Caco-2 (cell line): ENCODE measurements at regions of chr3 and their contacts with region 1.

Region 1: GRCh38 chr3:150253622-150254021 is 154.5 kb upstream of the TSC22D2 start:
- DNase-seq: no peak
- H3K4me3 ChIP-seq: no peak overlapping the region
- H3K4me3 Mint-ChIP-seq: no peak overlapping the region
- H3K27ac Mint-ChIP-seq: no peak overlapping the region
- H3K4me1 ChIP-seq: peaks cover 47% of the 10 kb centered on the region
- H3K4me1 Mint-ChIP-seq: peaks cover 16% of the 10 kb centered on the region
- H3K27me3 ChIP-seq: no peaks in the 10 kb centered on the region
- H3K27me3 Mint-ChIP-seq: no peaks in the 10 kb centered on the region
- CTCF ChIP-seq: no peak

Region 2: GRCh38 chr3:150268426-150269391 is 15.1 kb after region 1 on chr3:
- CTCF ChIA-PET with region 1: no interaction called
- POLR2A ChIA-PET with region 1: no interaction called
- intact Hi-C with region 1: loop called (anchors 2 kb)
- DNase-seq: peak; percentile 44 to 60
- H3K4me3 ChIP-seq: no peak overlapping the region
- H3K4me3 Mint-ChIP-seq: peak overlapping the region; percentile 67
- H3K27ac Mint-ChIP-seq: peak overlapping the region; percentile 66
- H3K4me1 ChIP-seq: peaks cover 39% of the 10 kb centered on the region
- H3K4me1 Mint-ChIP-seq: peaks cover 21% of the 10 kb centered on the region
- H3K27me3 ChIP-seq: no peaks in the 10 kb centered on the region
- H3K27me3 Mint-ChIP-seq: no peaks in the 10 kb centered on the region
- CTCF ChIP-seq: no peak

Region 3: GRCh38 chr3:150319904-150320303 is 66.3 kb after region 1 on chr3:
- CTCF ChIA-PET with region 1: no interaction called
- POLR2A ChIA-PET with region 1: no interaction called
- intact Hi-C with region 1: no loop called
- DNase-seq: peak; percentile 65 to 70
- H3K4me3 ChIP-seq: no peak overlapping the region
- H3K4me3 Mint-ChIP-seq: peak overlapping the region; percentile 27
- H3K27ac Mint-ChIP-seq: peak overlapping the region; percentile 29
- H3K4me1 ChIP-seq: peaks cover 53% of the 10 kb centered on the region
- H3K4me1 Mint-ChIP-seq: peaks cover 53% of the 10 kb centered on the region
- H3K27me3 ChIP-seq: no peaks in the 10 kb centered on the region
- H3K27me3 Mint-ChIP-seq: no peaks in the 10 kb centered on the region
- CTCF ChIP-seq: no peak

Region 4: DNA sequence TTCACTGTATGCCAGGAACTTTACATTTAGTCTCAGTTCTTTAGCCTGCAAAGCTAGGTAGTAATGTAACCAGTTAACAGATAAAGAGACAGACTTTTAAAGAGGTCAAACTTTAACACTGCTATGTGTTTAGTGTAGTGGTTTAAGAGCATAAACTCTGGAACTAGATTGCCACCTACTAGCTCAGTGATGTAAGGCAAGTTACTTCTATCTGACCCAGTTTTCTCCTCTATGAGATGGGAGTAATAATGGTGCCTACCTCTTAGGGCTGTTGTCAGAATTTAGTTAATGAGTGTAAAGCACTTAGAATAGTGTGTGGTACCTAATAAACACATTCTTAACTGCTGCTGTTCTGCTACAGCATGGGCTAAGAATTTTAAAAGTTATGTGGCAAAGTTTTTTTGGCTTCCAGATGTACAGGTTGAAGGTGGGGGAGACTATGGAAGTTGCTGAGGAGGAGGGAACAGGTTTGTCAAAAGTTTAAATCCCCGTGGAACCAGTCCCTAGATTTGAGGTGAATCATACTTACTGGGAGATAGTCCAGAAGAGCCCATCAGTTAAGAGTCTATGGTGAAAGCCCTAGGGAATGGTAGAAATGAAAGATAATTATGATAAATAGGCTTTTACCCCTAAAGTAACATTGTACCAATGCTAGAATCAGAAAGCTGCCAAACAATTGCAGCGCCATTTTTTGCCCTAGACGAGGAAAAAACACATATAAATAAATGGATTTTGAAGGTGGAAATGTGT is 168.4 kb after region 1 on chr3:
- CTCF ChIA-PET with region 1: no interaction called
- POLR2A ChIA-PET with region 1: no interaction called
- intact Hi-C with region 1: no loop called
- DNase-seq: no peak
- H3K4me3 ChIP-seq: no peak overlapping the region
- H3K4me3 Mint-ChIP-seq: no peak overlapping the region
- H3K27ac Mint-ChIP-seq: no peak overlapping the region
- H3K4me1 ChIP-seq: peaks cover 15% of the 10 kb centered on the region; the same call in 1 of the 2 replicates
- H3K4me1 Mint-ChIP-seq: no peaks in the 10 kb centered on the region
- H3K27me3 ChIP-seq: no peaks in the 10 kb centered on the region
- H3K27me3 Mint-ChIP-seq: no peaks in the 10 kb centered on the region
- CTCF ChIP-seq: no peak

Region 5: DNA sequence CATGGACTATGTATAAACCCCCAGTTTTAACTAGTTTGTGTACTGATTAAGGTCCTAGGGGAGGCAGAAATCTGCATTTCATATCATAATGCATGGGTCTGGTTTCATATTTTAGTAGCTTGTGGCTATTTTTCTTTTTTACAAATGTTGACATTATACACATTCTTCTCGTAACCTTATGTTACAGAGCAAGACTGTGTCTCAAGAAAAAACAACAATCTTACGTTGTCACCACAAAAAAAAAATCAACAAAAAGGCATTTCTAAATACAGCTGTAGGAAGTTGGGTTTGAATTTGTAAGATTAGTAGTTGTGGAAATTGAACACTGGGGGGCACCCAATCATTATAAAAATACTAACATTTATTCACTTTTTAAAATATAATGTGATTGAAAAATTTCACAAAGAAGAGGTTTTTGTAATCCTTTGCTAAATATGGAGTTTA is 274.8 kb after region 1 on chr3:
- CTCF ChIA-PET with region 1: no interaction called
- POLR2A ChIA-PET with region 1: no interaction called
- intact Hi-C with region 1: no loop called
- DNase-seq: no peak
- H3K4me3 ChIP-seq: no peak overlapping the region
- H3K4me3 Mint-ChIP-seq: no peak overlapping the region
- H3K27ac Mint-ChIP-seq: no peak overlapping the region
- H3K4me1 ChIP-seq: no peaks in the 10 kb centered on the region
- H3K4me1 Mint-ChIP-seq: no peaks in the 10 kb centered on the region
- H3K27me3 ChIP-seq: no peaks in the 10 kb centered on the region
- H3K27me3 Mint-ChIP-seq: peaks cover 3% of the 10 kb centered on the region
- CTCF ChIP-seq: peak in 1 of 2 experiments; percentile 24